SK-N-SH (cell line): ENCODE measurements at regions of chr15 and their contacts with region 1.

Region 1: GRCh38 chr15:66946578-66947164 is 118.7 kb upstream of the SMAD3 start:
- DNase-seq: peak; percentile 79
- H3K4me3 ChIP-seq: no peak overlapping the region
- H3K27ac ChIP-seq: no peak overlapping the region
- H3K4me1 ChIP-seq: peaks cover 0 to 4% of the 10 kb centered on the region in 2 experiments; a peak in 1 of 4 replicates
- H3K27me3 ChIP-seq: no peaks in the 10 kb centered on the region
- CTCF ChIP-seq: peak; percentile 94
- EP300 ChIP-seq: no peak
- RAD21 ChIP-seq: peak; percentile 99

Region 2: GRCh38 chr15:66875588-66876419 is 70.9 kb before region 1 on chr15:
- CTCF ChIA-PET with region 1: no interaction called
- POLR2A ChIA-PET with region 1: no interaction called
- DNase-seq: no peak
- H3K4me3 ChIP-seq: no peak overlapping the region
- H3K27ac ChIP-seq: no peak overlapping the region
- H3K4me1 ChIP-seq: no peaks in the 10 kb centered on the region; a peak in 1 of 4 replicates
- H3K27me3 ChIP-seq: no peaks in the 10 kb centered on the region
- CTCF ChIP-seq: no peak
- EP300 ChIP-seq: no peak
- RAD21 ChIP-seq: no peak

Region 3: GRCh38 chr15:66923438-66923881 is 23.2 kb before region 1 on chr15:
- CTCF ChIA-PET with region 1: interaction called, 11 read pairs
- POLR2A ChIA-PET with region 1: no interaction called
- DNase-seq: peak; percentile 54
- H3K4me3 ChIP-seq: 0 out of 4 replicates have a peak overlapping the region, but pooled peaks of 1 of the 2 experiments have one; percentile 20
- H3K27ac ChIP-seq: no peak overlapping the region
- H3K4me1 ChIP-seq: no peaks in the 10 kb centered on the region; a peak in 1 of 4 replicates
- H3K27me3 ChIP-seq: no peaks in the 10 kb centered on the region
- CTCF ChIP-seq: peak; percentile 53
- EP300 ChIP-seq: no peak
- RAD21 ChIP-seq: peak; percentile 21; the same call in 1 of the 2 replicates

Region 4: GRCh38 chr15:67240235-67241131 is 293.8 kb after region 1 on chr15:
- CTCF ChIA-PET with region 1: interaction called, 25 read pairs
- POLR2A ChIA-PET with region 1: no interaction called
- DNase-seq: peak; percentile 57
- H3K4me3 ChIP-seq: no peak overlapping the region
- H3K27ac ChIP-seq: 0 out of 4 replicates have a peak overlapping the region, but pooled peaks of 1 of the 2 experiments have one; percentile 6
- H3K4me1 ChIP-seq: peaks cover 7 to 13% of the 10 kb centered on the region in 2 experiments; a peak in 3 of 4 replicates
- H3K27me3 ChIP-seq: no peaks in the 10 kb centered on the region
- CTCF ChIP-seq: peak; percentile 51
- EP300 ChIP-seq: no peak
- RAD21 ChIP-seq: peak; percentile 67

Region 5: DNA sequence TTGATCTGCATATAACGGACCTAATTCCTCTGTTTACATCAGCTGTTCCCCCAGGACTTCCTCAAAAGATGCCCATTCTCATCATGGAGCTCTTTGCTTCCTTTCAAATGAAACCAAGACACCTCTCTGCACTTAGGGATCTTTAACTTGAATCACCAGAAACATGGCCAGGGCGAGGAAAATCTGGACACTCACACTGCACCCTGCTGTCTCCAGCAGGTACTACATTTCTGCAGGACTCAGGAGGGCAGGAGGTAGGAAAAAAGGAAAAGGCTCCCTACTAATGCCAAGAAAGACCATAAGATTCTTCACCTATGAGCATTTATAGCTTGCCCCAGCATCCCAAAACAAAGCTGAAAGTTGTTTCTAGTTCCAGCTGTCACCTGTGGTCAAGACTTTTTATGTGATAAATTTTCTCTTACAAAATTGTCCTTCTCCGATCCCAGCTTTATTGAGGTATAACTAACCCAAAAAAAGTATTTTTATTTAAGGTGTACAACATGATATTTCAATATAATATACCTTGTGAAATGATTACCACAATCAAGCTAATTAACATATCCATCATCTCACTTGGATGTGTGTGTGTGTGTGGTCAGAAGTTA is 486.9 kb after region 1 on chr15:
- CTCF ChIA-PET with region 1: interaction called, 42 read pairs
- POLR2A ChIA-PET with region 1: no interaction called
- DNase-seq: peak; percentile 63
- H3K4me3 ChIP-seq: no peak overlapping the region; a peak in 1 of 4 replicates
- H3K27ac ChIP-seq: no peak overlapping the region
- H3K4me1 ChIP-seq: no peaks in the 10 kb centered on the region
- H3K27me3 ChIP-seq: no peaks in the 10 kb centered on the region
- CTCF ChIP-seq: peak; percentile 74
- EP300 ChIP-seq: no peak
- RAD21 ChIP-seq: peak; percentile 80

Region 6: GRCh38 chr15:67501177-67501835 is 554.6 kb after region 1 on chr15:
- CTCF ChIA-PET with region 1: interaction called, 10 read pairs
- POLR2A ChIA-PET with region 1: no interaction called
- DNase-seq: peak; percentile 38
- H3K4me3 ChIP-seq: no peak overlapping the region
- H3K27ac ChIP-seq: no peak overlapping the region
- H3K4me1 ChIP-seq: peaks cover 0 to 3% of the 10 kb centered on the region in 2 experiments; a peak in 2 of 4 replicates
- H3K27me3 ChIP-seq: no peaks in the 10 kb centered on the region
- CTCF ChIP-seq: peak; percentile 58
- EP300 ChIP-seq: no peak
- RAD21 ChIP-seq: peak; percentile 76